ENCODE measurements at regions of chr19 and their contacts with region 1.

Region 1: DNA sequence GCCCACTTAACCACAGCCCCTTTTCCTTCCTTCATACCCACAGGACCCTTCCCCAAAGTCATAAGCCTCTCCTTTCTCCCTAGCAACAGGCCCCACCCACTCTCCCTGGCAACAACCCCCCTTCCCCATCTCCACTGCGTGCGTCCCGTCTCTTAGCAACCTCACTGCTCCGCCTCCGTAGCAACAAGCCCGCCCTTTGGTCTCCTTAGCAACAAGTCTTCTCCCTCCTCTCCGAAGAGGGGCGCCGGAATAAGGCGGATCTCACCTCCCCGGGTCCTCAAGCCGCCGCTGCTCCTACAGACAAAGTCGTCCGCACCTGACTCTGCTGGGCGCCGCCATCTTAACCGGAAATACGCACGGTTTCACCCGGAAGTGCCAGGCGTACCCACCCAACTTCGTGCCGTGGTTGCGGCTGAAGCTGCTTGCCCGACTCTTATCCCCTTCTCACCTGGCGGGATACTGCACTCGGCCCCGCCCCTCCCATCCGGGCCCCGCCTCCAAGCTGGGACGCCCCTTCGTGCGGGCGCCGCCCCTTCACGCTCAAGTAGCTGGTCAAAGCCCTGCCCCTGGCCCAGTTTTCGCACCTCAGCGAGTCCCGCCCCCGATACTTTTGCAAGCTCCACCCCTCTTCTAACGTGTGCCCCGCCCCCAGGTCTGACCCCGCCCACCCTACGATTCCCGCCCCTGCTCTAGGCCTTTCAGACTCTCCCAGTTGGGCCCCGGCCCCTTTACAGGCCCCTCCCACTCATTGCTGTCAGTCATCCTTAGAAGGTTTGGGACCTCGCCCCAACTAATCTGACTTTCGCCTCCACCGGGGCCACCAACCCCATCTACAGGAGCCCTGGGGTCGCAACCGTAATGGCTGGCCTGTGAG is at the start of gene HSPBP1:
- DNase-seq: peak; percentile 84
- H3K4me3 ChIP-seq: peak within 1 kb of the TSS; percentile 92
- H3K27ac ChIP-seq: peak within 1 kb of the TSS; percentile 84
- H3K27me3 ChIP-seq: no peaks in the 10 kb centered on the region
- CTCF ChIP-seq: no peak
- polyA plus RNA-seq, gene HSPBP1: 18.5 and 27.4 TPM in 2 replicates

Region 2: DNA sequence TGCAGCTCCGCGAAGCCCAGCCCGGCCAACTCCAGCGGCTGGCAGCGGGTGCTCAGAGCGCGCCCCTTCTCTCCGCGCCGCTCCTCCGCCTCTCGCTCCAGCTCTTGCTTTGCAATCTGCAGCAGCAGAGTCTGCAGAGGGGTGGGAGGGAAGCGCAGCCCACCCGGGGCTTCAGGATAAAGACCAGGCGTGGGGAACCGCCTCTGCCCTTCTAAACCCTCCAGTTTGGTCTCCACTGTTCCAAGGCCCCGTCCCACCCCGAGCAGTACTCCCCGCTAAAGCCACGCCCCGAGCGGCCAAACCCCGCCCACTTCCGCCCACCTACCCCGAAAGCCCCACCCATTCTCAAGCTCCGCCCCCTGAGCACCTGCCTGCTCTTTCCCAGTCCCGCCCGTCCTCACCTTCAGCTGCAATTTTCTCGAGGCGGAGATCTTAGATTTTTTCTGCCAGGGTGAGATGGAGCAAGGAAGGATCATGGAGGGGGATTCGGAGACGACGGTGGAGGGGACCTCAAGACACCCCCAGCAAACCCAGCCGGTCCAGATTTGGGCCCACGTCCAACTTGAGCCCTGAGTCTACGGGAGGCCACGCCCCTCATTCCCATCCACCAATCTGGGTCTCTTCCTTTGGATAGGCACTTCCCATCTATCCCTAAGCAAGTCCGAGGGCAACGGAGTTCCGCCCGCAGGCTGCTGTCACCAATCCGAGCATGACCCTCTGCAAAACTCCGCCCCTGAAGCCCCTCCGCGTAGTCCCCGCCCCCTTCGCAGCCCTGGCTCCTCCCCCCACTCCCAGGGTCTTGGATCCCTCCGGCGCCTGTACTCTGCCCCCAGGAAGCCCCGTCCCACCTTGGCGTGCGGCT is 123.6 kb before region 1 on chr19:
- CTCF ChIA-PET with region 1: no interaction called
- POLR2A ChIA-PET with region 1: no interaction called
- DNase-seq: no peak
- H3K4me3 ChIP-seq: 0 out of 2 replicates have a peak overlapping the region, but pooled peaks have one; percentile 10
- H3K27ac ChIP-seq: no peak overlapping the region
- H3K27me3 ChIP-seq: peaks cover 28% of the 10 kb centered on the region
- CTCF ChIP-seq: no peak

Region 3: GRCh38 chr19:55258828-55259539 is 21.0 kb before region 1 on chr19 and contains the start of gene PPP6R1:
- CTCF ChIA-PET with region 1: no interaction called
- POLR2A ChIA-PET with region 1: interaction called, 17 read pairs
- DNase-seq: peak; percentile 100
- H3K4me3 ChIP-seq: peak within 1 kb of the TSS; percentile 87
- H3K27ac ChIP-seq: peak within 1 kb of the TSS; percentile 89
- H3K27me3 ChIP-seq: no peaks in the 10 kb centered on the region
- CTCF ChIP-seq: no peak
- polyA plus RNA-seq, gene PPP6R1: 24.5 and 30.1 TPM in 2 replicates

Region 4: GRCh38 chr19:55426042-55426441 is 146.0 kb after region 1 on chr19:
- CTCF ChIA-PET with region 1: no interaction called
- POLR2A ChIA-PET with region 1: interaction called, 10 read pairs
- DNase-seq: no peak
- H3K4me3 ChIP-seq: no peak overlapping the region
- H3K27ac ChIP-seq: no peak overlapping the region
- H3K27me3 ChIP-seq: peaks cover 16% of the 10 kb centered on the region
- CTCF ChIP-seq: no peak